SK-MEL-5 (cell line): ENCODE measurements at regions of chr2 and their contacts with region 1.

Region 1: DNA sequence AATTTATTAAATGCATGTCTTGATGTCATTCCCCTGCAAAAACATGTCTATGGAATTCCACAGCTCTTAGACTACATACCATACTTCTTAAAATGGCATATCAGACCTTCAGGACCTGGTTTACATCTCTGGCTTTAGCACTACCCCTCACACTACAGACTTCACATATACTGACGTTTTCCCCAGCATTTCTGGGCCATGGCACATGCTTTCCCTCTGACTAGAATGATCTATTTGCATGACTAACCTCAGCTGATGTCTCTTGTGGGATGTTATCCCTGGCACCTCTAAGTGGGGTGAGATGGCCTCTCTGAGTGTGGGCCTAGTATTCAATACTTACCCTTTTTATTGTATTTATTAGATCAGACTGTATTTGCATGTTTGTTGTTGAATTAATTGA is 381.6 kb downstream of the ERBB4 start:
- DNase-seq: no peak

Region 2: DNA sequence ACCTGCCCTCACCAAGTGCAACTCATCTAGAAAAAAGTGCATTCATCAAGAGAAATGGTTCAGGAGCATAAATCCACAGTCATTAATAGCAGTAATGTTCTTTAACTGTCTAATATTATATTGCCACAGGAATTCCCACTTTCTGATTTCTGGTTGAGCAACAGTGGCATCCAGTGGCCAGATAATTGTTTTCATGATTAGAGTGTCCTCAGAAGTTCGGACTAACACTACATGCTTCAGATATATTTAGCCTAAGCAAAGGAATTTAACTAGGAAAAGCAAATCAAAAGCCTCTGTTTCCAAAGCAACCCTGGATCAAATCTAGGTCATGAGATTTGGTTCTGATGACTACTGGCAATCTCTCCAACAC is 391.4 kb after region 1 on chr2:
- in situ Hi-C with region 1: loop called (anchors 10 kb)
- DNase-seq: peak; percentile 71